Activated CD4-positive, alpha-beta memory T cell treated with anti-CD3 and anti-CD28 coated beads for 36 hours (primary cell): ENCODE measurements at regions of chr2 and their contacts with region 1.

Region 1: GRCh38 chr2:119826370-119826961 is 66.7 kb downstream of the PTPN4 start:
- DNase-seq: peak; percentile 57
- H3K4me3 Mint-ChIP-seq: no peak overlapping the region
- H3K27ac Mint-ChIP-seq: no peak overlapping the region
- H3K4me1 Mint-ChIP-seq: peaks cover 42% of the 10 kb centered on the region
- H3K27me3 Mint-ChIP-seq: no peaks in the 10 kb centered on the region

Region 2: GRCh38 chr2:119753041-119753929 is 73.2 kb before region 1 on chr2:
- CTCF ChIA-PET with region 1: interaction called, 26 read pairs
- POLR2A ChIA-PET with region 1: no interaction called
- intact Hi-C with region 1: loop called (anchors 1 kb)
- DNase-seq: peak; percentile 19
- H3K4me3 Mint-ChIP-seq: no peak overlapping the region
- H3K27ac Mint-ChIP-seq: no peak overlapping the region
- H3K4me1 Mint-ChIP-seq: peaks cover 16% of the 10 kb centered on the region
- H3K27me3 Mint-ChIP-seq: no peaks in the 10 kb centered on the region